HCT116 (cell line): ENCODE measurements at regions of chr4 and their contacts with region 1.

Region 1: DNA sequence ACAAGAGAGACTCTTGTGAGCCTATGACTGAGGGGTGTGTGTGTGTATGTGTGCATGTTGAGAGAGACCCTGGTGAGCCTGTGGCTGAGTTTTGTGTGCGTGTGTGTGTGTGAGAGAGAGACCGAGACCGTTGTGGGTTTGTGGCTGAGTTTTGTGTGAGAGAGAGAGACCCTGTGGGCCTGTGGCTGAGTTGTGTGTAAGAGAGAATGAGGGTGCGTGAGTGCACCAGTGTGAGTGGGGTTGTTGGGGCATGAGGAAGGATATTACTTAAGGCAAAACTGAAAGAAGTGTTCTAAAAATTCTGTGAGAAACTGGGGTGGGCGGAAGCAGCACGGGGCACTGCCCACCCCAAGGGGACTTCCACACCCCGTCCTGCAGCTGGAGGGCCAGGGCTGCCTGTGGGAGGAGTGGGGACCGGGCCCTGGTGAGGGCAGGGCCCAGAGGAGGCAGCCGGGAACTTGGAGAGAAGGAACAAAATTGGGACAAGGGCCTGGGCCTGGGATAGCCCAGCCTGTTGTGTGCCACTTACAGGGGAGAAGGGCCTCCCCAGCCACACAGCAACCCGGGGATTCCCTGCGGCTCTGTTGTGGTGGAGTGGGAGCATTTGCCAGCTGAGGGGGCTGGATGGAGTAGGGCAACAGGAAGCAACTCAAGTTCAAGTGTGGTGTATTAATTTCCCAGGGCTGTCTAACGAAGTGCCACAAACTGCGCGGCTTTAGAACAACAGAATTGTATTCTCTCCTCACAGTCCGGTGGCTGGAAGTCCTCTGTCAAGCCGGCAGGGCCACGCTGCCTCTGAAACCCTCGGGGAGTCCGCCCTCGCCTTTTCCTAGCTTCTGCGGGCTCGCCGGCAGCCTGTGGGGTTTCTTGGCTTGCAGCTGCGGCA is 22.1 kb downstream of the TMEM131L start:
- DNase-seq: no peak
- ATAC-seq: no peak
- H3K4me3 ChIP-seq: no peak overlapping the region
- H3K27ac ChIP-seq: peak overlapping the region; percentile 75
- H3K4me1 ChIP-seq: peaks cover 39 to 63% of the 10 kb centered on the region in 2 experiments
- H3K27me3 ChIP-seq: no peaks in the 10 kb centered on the region
- CTCF ChIP-seq: no peak
- POLR2A ChIP-seq: no peak
- RAD21 ChIP-seq: no peak

Region 2: GRCh38 chr4:153348006-153348405 is 140.2 kb before region 1 on chr4:
- CTCF ChIA-PET with region 1: no interaction called
- POLR2A ChIA-PET with region 1: no interaction called
- RAD21 ChIA-PET with region 1: no interaction called
- intact Hi-C with region 1: no loop called
- DNase-seq: no peak
- ATAC-seq: no peak
- H3K4me3 ChIP-seq: no peak overlapping the region
- H3K27ac ChIP-seq: no peak overlapping the region
- H3K4me1 ChIP-seq: peaks cover 6 to 24% of the 10 kb centered on the region in 2 experiments
- H3K27me3 ChIP-seq: no peaks in the 10 kb centered on the region
- CTCF ChIP-seq: no peak
- POLR2A ChIP-seq: no peak
- RAD21 ChIP-seq: no peak

Region 3: GRCh38 chr4:153466081-153466948 is 21.9 kb before region 1 on chr4 and contains the start of gene TMEM131L:
- CTCF ChIA-PET with region 1: no interaction called
- POLR2A ChIA-PET with region 1: interaction called, 11 read pairs
- RAD21 ChIA-PET with region 1: no interaction called
- intact Hi-C with region 1: no loop called
- DNase-seq: peak; percentile 21
- ATAC-seq: peak; percentile 74
- H3K4me3 ChIP-seq: peak within 1 kb of the TSS; percentile 76 to 82
- H3K27ac ChIP-seq: peak within 1 kb of the TSS; percentile 68
- H3K4me1 ChIP-seq: peaks cover 19 to 37% of the 10 kb centered on the region in 2 experiments
- H3K27me3 ChIP-seq: no peaks in the 10 kb centered on the region
- CTCF ChIP-seq: no peak
- POLR2A ChIP-seq: no peak
- RAD21 ChIP-seq: 0 out of 2 replicates have a peak, but pooled peaks have one; percentile 6
- total RNA-seq, gene TMEM131L: 19.7 TPM